Activated T-helper 2 cell treated with anti-CD3 and anti-CD28 coated beads, Interferon-gamma antibody, Interleukin-2, Interleukin-4, amounts not matched to agents 10 μg/mL and 5 μg/mL and 100 μg/mL, durations not matched to agents 14 hours and 24 hours and 36 hours (primary cell): ENCODE measurements at regions of chr14 and their contacts with region 1.

Region 1: GRCh38 chr14:63543000-63543825 is at the start of gene PPP2R5E:
- DNase-seq: peak; percentile 98
- H3K4me3 Mint-ChIP-seq: peak within 1 kb of the TSS; percentile 92
- H3K27ac Mint-ChIP-seq: peak within 1 kb of the TSS; percentile 95
- H3K4me1 Mint-ChIP-seq: peaks cover 27% of the 10 kb centered on the region
- H3K27me3 Mint-ChIP-seq: peaks cover 1% of the 10 kb centered on the region
- total RNA-seq, gene PPP2R5E: 44.1 and 47.6 TPM in 2 replicates

Region 2: GRCh38 chr14:63388763-63389431 is 154.3 kb before region 1 on chr14:
- intact Hi-C with region 1: loop called (anchors 2 kb)
- DNase-seq: peak; percentile 48
- H3K4me3 Mint-ChIP-seq: no peak overlapping the region
- H3K27ac Mint-ChIP-seq: no peak overlapping the region
- H3K4me1 Mint-ChIP-seq: peaks cover 8% of the 10 kb centered on the region
- H3K27me3 Mint-ChIP-seq: no peaks in the 10 kb centered on the region

Region 3: DNA sequence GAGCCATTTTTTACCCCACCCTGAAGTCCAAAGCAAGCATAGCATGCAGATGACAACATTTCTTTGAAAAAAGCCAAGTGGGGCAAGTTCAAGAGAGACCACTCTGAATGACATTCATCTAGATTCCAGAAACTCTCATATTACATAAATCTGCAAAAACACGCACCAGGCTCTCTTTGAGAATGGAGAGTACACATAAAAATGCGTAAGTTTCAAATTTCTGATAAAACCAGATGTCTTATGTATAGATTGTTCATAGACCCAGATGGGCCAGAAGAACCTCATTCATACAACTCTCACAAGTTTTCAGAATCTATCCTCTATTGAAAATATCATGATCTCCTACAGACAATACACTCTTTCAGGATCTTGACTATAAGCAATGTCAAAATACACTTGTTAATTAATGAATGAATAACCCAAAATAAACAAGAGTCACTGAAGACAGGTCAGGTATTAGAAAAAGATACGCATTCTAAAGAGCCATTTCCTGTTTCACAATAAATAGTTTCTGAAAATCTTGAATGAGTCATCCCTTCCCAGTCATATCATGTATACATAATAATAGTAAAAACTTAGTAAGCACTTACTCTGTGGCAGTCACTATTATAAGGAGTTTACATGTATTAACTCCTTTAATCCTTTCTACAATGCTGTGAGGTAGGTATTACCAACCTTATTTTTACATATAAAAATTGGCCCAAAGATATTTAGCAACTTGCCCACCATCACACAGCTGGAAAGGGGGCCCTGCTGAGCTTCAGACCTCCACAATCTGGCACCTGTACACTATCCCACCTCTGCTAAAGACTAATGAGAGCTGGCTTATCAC is 72.0 kb before region 1 on chr14:
- intact Hi-C with region 1: loop called (anchors 2 kb)
- DNase-seq: no peak
- H3K4me3 Mint-ChIP-seq: peak overlapping the region; percentile 26
- H3K27ac Mint-ChIP-seq: peak overlapping the region; percentile 59
- H3K4me1 Mint-ChIP-seq: peaks cover 40% of the 10 kb centered on the region
- H3K27me3 Mint-ChIP-seq: no peaks in the 10 kb centered on the region

Region 4: GRCh38 chr14:63478010-63478409 is 65.2 kb before region 1 on chr14:
- intact Hi-C with region 1: loop called (anchors 2 kb)
- DNase-seq: peak; percentile 26
- H3K4me3 Mint-ChIP-seq: no peak overlapping the region
- H3K27ac Mint-ChIP-seq: peak overlapping the region; percentile 43
- H3K4me1 Mint-ChIP-seq: peaks cover 38% of the 10 kb centered on the region
- H3K27me3 Mint-ChIP-seq: no peaks in the 10 kb centered on the region

Region 5: GRCh38 chr14:63524537-63525155 is 18.6 kb before region 1 on chr14:
- intact Hi-C with region 1: no loop called
- DNase-seq: no peak
- H3K4me3 Mint-ChIP-seq: no peak overlapping the region
- H3K27ac Mint-ChIP-seq: peak overlapping the region; percentile 7
- H3K4me1 Mint-ChIP-seq: peaks cover 9% of the 10 kb centered on the region
- H3K27me3 Mint-ChIP-seq: no peaks in the 10 kb centered on the region

Region 6: GRCh38 chr14:63641473-63642228 is 98.4 kb after region 1 on chr14 and contains the start of gene WDR89:
- intact Hi-C with region 1: loop called (anchors 1 kb)
- DNase-seq: peak; percentile 97
- H3K4me3 Mint-ChIP-seq: peak within 1 kb of the TSS; percentile 92
- H3K27ac Mint-ChIP-seq: peak within 1 kb of the TSS; percentile 98
- H3K4me1 Mint-ChIP-seq: peaks cover 22% of the 10 kb centered on the region
- H3K27me3 Mint-ChIP-seq: no peaks in the 10 kb centered on the region
- total RNA-seq, gene WDR89: 25.5 and 25.9 TPM in 2 replicates

Region 7: GRCh38 chr14:63727774-63728728 is 184.8 kb after region 1 on chr14 and contains the start of gene SGPP1:
- intact Hi-C with region 1: loop called (anchors 5 kb)
- DNase-seq: peak; percentile 80
- H3K4me3 Mint-ChIP-seq: peak within 1 kb of the TSS; percentile 100
- H3K27ac Mint-ChIP-seq: peak within 1 kb of the TSS; percentile 94
- H3K4me1 Mint-ChIP-seq: peaks cover 29% of the 10 kb centered on the region
- H3K27me3 Mint-ChIP-seq: peaks cover 22% of the 10 kb centered on the region
- total RNA-seq, gene SGPP1: 13.0 and 14.0 TPM in 2 replicates

Region 8: GRCh38 chr14:63745858-63746425 is 202.7 kb after region 1 on chr14:
- intact Hi-C with region 1: no loop called
- DNase-seq: peak; percentile 14
- H3K4me3 Mint-ChIP-seq: no peak overlapping the region
- H3K27ac Mint-ChIP-seq: no peak overlapping the region
- H3K4me1 Mint-ChIP-seq: peaks cover 14% of the 10 kb centered on the region
- H3K27me3 Mint-ChIP-seq: peaks cover 3% of the 10 kb centered on the region

Region 9: DNA sequence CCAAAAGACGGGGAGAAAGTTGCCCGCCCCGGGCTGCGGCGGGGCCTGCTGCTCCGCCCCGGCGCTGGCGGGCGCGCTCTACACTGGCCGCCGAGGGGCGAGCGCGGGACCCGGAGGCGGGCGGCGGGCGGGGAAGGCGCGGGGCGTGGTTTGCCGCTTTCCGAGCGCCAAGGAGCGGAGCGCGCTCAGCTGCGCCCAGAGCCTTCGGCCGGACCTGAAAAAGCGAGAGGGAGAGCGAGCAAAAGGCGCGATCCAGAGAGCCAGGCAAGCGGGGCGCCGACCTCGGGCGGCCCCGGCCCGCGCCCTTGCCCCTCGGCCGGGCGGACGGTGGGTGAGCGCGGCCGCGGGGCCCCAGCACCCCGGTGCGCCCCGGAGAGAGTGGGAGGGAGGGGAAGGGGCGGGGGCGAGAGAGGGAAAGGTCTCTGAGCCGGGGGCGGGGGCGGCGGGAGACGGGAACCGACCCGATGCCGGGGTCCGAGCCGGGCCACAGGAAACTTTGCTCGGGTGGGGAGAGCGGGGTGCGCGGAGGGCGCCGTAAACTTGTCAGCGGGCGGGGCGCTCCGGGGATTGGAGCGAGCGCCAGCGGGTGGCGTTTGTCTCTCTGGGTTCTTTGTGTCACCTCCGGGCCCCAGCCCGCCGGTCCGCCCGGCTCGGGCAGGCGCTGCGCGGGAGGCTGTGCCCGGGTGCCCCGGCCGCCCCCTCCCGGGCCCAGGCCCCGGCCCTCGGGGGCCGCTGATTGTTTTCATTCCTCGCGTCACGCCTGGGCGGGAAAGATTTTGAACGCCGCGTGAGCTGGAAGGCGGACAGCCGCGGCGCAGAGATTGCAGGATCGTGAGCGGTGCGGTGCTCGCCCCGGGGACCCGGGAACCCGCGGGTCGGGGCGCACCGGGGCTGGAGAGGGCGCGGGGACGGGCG is 309.9 kb after region 1 on chr14 and contains the start of gene SYNE2:
- intact Hi-C with region 1: loop called (anchors 10 kb)
- DNase-seq: peak; percentile 76
- H3K4me3 Mint-ChIP-seq: peak within 1 kb of the TSS; percentile 93
- H3K27ac Mint-ChIP-seq: peak within 1 kb of the TSS; percentile 89
- H3K4me1 Mint-ChIP-seq: peaks cover 38% of the 10 kb centered on the region
- H3K27me3 Mint-ChIP-seq: peaks cover 46% of the 10 kb centered on the region
- total RNA-seq, gene SYNE2: 15.2 and 16.1 TPM in 2 replicates